ENCODE measurements at regions of chr6 and their contacts with region 1.

Region 1: GRCh38 chr6:51855310-51856082 is 231.9 kb downstream of the PKHD1 start:
- DNase-seq: peak; percentile 90
- H3K4me3 ChIP-seq: no peak overlapping the region
- H3K27ac ChIP-seq: no peak overlapping the region
- H3K4me1 ChIP-seq: no peaks in the 10 kb centered on the region
- H3K27me3 ChIP-seq: no peaks in the 10 kb centered on the region
- CTCF ChIP-seq: peak; percentile 87

Region 2: GRCh38 chr6:51743999-51744398 is 111.5 kb before region 1 on chr6:
- CTCF ChIA-PET with region 1: no interaction called
- POLR2A ChIA-PET with region 1: no interaction called
- intact Hi-C with region 1: no loop called
- DNase-seq: no peak
- H3K4me3 ChIP-seq: no peak overlapping the region
- H3K27ac ChIP-seq: no peak overlapping the region
- H3K4me1 ChIP-seq: no peaks in the 10 kb centered on the region
- H3K27me3 ChIP-seq: peaks cover 12% of the 10 kb centered on the region
- CTCF ChIP-seq: no peak

Region 3: DNA sequence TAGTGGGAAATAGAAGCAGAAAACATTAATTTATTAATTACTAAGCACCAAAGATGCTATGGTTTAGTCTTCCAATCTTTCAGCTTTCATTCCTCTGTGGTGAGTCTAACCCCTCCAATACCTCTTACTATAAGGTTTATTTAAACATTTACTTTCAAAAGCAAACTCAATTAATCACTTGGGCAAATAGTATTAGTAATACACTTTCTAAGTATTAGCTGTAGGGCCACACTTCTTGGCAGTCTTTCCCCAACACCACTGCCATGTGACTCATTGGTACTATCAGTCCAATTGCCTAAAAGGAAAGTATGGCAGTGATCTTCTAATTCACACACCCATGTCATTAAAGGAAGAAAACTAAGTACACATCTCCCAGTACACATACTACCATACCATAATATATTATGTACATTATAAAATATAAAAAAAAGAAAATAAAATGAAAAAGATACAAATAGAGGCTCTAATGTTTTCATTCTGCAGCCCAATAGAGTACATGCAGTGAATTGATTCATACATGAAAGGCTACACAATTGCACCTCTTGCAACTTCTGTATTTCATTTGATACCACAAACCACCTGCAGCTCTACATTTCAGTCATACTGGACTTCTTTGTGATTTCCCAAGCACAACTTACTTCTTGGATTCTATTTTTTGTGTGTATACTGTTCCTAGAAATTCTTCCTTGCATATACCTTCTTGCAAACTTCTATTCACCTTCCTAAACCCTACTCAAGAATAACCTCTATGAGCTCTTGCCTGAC is 13.3 kb after region 1 on chr6:
- CTCF ChIA-PET with region 1: interaction called, 29 read pairs
- POLR2A ChIA-PET with region 1: no interaction called
- intact Hi-C with region 1: no loop called
- DNase-seq: no peak
- H3K4me3 ChIP-seq: no peak overlapping the region
- H3K27ac ChIP-seq: no peak overlapping the region
- H3K4me1 ChIP-seq: no peaks in the 10 kb centered on the region
- H3K27me3 ChIP-seq: peaks cover 34% of the 10 kb centered on the region
- CTCF ChIP-seq: no peak

Region 4: GRCh38 chr6:51959744-51960383 is 104.4 kb after region 1 on chr6:
- CTCF ChIA-PET with region 1: interaction called, 6 read pairs
- POLR2A ChIA-PET with region 1: no interaction called
- intact Hi-C with region 1: loop called (anchors 1 kb)
- DNase-seq: peak; percentile 79
- H3K4me3 ChIP-seq: no peak overlapping the region
- H3K27ac ChIP-seq: no peak overlapping the region
- H3K4me1 ChIP-seq: no peaks in the 10 kb centered on the region
- H3K27me3 ChIP-seq: no peaks in the 10 kb centered on the region
- CTCF ChIP-seq: peak; percentile 92

Region 5: DNA sequence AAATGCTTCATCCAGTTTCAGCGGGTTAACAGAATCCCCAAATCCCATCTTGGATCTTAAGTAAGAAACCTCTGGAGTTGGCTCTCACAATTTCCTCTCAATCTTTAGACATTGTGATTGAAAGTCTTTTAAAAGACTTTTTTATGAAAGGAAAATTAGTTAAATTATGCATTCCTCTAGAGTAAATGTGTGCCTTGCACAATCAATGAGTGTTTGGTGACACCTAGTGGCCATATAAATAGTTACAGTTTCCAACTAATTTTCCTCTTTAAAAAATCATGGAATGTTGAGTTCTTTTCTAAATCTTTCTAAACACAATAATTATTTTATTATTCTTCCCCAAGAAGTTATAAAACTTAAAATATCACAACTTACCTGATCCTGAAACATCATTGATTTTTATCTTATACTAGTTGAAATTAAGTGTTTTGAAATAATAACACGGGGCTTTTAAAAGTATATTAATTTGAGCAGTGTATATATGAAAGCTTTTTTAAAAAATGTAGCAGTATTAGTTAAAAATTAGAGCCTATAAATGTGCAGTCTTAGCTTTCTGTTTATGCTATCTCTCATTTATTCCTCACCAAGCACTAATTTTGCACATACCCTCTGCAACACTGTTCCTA is 165.6 kb after region 1 on chr6:
- CTCF ChIA-PET with region 1: no interaction called
- POLR2A ChIA-PET with region 1: no interaction called
- intact Hi-C with region 1: loop called (anchors 2 kb)
- DNase-seq: peak; percentile 55
- H3K4me3 ChIP-seq: no peak overlapping the region
- H3K27ac ChIP-seq: no peak overlapping the region
- H3K4me1 ChIP-seq: no peaks in the 10 kb centered on the region
- H3K27me3 ChIP-seq: no peaks in the 10 kb centered on the region
- CTCF ChIP-seq: peak; percentile 80

Region 6: DNA sequence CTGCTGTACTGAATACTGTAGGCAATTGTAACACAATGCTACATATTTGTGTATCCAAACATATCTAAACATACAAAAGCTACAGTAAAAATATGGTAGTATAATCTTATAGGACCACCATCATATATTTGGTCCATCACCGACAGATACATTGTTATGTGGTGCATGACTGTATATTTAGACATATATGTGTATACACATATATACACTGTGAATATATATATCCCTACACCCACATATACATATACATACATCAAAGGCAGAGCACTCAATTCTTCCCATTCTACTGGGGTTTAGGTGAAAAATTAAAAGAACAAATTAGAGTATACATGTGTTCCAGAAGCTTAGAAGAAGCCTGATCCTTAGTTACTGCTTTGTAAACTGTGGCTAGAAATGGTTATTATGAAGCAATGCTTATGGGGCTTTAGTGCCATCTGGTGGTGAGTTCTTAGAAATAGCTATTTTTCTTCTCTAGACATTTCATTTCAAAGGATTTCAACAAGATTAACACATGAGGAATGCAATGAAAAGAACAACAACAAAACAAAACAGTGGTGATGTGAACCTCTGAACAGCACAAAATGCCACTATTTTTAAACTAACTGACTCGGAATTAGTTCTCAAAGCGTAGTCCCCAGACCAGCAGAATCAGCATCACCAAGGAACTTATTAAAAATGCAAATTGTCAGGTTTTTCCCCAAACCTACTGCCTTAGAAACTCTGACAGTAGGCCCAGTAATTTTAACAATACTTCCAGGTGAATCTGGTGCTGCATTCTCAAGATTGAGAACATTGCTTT is 194.0 kb after region 1 on chr6:
- CTCF ChIA-PET with region 1: no interaction called
- POLR2A ChIA-PET with region 1: no interaction called
- intact Hi-C with region 1: loop called (anchors 1 kb)
- DNase-seq: peak; percentile 77
- H3K4me3 ChIP-seq: no peak overlapping the region
- H3K27ac ChIP-seq: no peak overlapping the region
- H3K4me1 ChIP-seq: peaks cover 29% of the 10 kb centered on the region
- H3K27me3 ChIP-seq: no peaks in the 10 kb centered on the region
- CTCF ChIP-seq: peak; percentile 83

Region 7: GRCh38 chr6:52233975-52234823 is 378.7 kb after region 1 on chr6:
- CTCF ChIA-PET with region 1: no interaction called
- POLR2A ChIA-PET with region 1: no interaction called
- intact Hi-C with region 1: loop called (anchors 10 kb)
- DNase-seq: peak; percentile 91
- H3K4me3 ChIP-seq: no peak overlapping the region
- H3K27ac ChIP-seq: peak overlapping the region; percentile 1
- H3K4me1 ChIP-seq: peaks cover 16% of the 10 kb centered on the region
- H3K27me3 ChIP-seq: no peaks in the 10 kb centered on the region
- CTCF ChIP-seq: peak; percentile 81

Measured in A673 (cell line).